Activated CD4-positive, alpha-beta T cell treated with anti-CD3 and anti-CD28 coated beads for 36 hours (primary cell): ENCODE measurements at regions of chr17 and their contacts with region 1.

Region 1: GRCh38 chr17:27892866-27893769 is at the start of gene LYRM9:
- DNase-seq: peak; percentile 96
- ATAC-seq: peak; percentile 96
- H3K4me3 Mint-ChIP-seq: peak within 1 kb of the TSS; percentile 76
- H3K27ac Mint-ChIP-seq: peak within 1 kb of the TSS; percentile 63
- H3K4me1 Mint-ChIP-seq: peaks cover 21% of the 10 kb centered on the region
- H3K27me3 Mint-ChIP-seq: peaks cover 17% of the 10 kb centered on the region
- total RNA-seq, gene LYRM9: 5.9 to 6.3 TPM

Region 2: DNA sequence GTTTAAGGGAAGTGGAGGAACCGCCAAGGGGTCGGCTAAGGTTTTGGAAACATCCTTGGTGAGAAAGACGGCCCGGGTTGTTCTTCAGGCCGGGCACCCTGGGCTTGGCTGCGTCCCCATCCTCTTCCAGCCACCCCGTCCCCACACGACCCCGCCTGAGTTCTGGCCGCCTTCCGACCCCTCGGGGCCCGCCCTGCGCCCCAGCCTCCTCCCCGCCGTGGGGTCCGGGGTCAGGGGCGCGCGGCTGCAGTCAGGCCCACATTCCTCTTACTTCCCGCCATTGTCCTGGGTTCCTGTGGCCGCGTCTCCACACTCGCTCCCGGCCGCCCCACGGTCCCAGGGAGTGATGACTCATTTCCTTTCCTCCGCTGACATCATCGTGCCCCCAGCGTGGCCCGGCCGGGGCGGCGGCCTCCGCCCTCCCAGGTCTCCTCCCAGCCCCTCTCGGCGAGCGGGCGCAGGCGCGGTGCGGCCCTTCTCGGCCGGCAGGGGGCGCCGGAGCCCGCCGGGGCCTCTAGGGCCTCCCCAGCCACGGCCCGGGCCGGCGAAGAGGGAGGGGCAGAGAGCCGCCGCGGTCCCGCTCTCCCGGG is 539.6 kb before region 1 on chr17:
- CTCF ChIA-PET with region 1: no interaction called
- POLR2A ChIA-PET with region 1: no interaction called
- intact Hi-C with region 1: loop called in 1 of 2 experiments (anchors 5 kb)
- DNase-seq: peak; percentile 94
- ATAC-seq: peak; percentile 90
- H3K4me3 Mint-ChIP-seq: peak overlapping the region; percentile 85
- H3K27ac Mint-ChIP-seq: peak overlapping the region; percentile 95
- H3K4me1 Mint-ChIP-seq: peaks cover 25% of the 10 kb centered on the region
- H3K27me3 Mint-ChIP-seq: no peaks in the 10 kb centered on the region

Region 3: GRCh38 chr17:27879987-27880608 is 13.0 kb before region 1 on chr17:
- CTCF ChIA-PET with region 1: interaction called, 31 read pairs
- POLR2A ChIA-PET with region 1: no interaction called
- intact Hi-C with region 1: no loop called
- DNase-seq: peak; percentile 85
- ATAC-seq: peak; percentile 91
- H3K4me3 Mint-ChIP-seq: no peak overlapping the region
- H3K27ac Mint-ChIP-seq: no peak overlapping the region
- H3K4me1 Mint-ChIP-seq: peaks cover 17% of the 10 kb centered on the region
- H3K27me3 Mint-ChIP-seq: no peaks in the 10 kb centered on the region

Region 4: DNA sequence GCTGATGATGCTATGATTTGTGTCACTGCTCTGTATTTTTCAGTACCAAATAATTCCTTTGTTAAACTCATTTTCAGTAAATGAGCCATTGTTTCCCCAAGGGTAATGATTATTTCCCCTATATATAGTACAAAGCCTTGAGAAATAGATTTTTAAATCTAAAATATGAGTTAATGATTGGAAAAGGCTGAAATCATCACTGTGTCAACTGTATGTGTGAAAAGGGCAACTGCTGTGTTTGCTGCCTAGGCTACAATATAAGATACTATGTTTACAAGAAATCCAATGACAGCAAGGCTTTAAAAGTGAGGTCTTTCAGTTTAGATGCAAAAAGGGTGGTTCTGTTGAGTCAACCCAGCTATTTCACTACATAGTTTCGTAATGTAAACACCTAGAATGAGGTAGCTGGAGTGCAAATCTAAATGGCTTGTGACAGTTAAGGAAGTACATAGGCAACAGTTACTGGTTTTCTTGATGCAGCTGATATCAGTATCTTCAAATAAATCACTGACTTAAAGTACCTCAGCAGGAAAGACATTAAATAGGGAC is 164.7 kb after region 1 on chr17:
- CTCF ChIA-PET with region 1: no interaction called
- POLR2A ChIA-PET with region 1: no interaction called
- intact Hi-C with region 1: no loop called
- DNase-seq: no peak
- ATAC-seq: peak; percentile 92
- H3K4me3 Mint-ChIP-seq: no peak overlapping the region
- H3K27ac Mint-ChIP-seq: no peak overlapping the region
- H3K4me1 Mint-ChIP-seq: peaks cover 35% of the 10 kb centered on the region
- H3K27me3 Mint-ChIP-seq: no peaks in the 10 kb centered on the region

Region 5: DNA sequence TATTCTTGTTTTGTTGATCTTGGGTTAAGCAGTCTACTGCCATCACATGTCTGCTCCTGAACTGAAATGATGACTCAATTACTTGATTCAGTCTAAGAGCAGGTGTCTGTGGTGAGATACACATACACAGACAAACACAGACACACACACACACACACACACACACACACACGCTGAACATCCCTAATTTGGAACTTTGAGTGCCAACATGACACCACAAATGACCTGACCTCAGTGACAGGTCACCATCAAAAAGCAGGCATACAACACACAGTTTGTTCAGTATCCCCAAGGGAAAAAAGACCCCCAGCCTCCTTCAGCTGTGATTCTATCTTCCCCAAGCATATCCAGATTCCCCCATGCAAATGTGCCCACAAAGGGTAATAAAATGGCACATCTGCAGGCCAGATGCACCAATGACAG is 295.7 kb after region 1 on chr17:
- CTCF ChIA-PET with region 1: no interaction called
- POLR2A ChIA-PET with region 1: no interaction called
- intact Hi-C with region 1: no loop called
- DNase-seq: no peak
- ATAC-seq: no peak
- H3K4me3 Mint-ChIP-seq: no peak overlapping the region
- H3K27ac Mint-ChIP-seq: no peak overlapping the region
- H3K4me1 Mint-ChIP-seq: no peaks in the 10 kb centered on the region
- H3K27me3 Mint-ChIP-seq: no peaks in the 10 kb centered on the region

Region 6: DNA sequence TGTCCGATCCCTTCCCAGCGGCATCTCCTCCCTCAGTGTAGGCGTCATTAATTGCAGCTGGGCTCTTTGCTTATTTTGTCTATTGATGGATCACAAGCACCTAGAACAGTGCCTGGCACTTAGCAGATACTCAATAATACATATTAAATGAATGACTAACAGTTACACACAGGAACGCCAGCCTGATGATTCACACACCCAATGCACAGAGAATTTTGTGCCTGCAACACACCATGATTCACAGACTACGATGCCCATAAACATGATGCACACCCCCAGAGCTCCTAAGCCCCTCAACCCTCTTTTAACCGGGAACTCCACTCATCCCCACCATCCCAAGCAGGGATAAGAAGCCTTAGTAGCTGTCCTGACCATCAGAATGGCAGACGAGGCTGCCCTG is 359.3 kb after region 1 on chr17:
- CTCF ChIA-PET with region 1: interaction called, 13 read pairs
- POLR2A ChIA-PET with region 1: no interaction called
- intact Hi-C with region 1: loop called (anchors 1 kb)
- DNase-seq: no peak
- ATAC-seq: no peak
- H3K4me3 Mint-ChIP-seq: no peak overlapping the region
- H3K27ac Mint-ChIP-seq: no peak overlapping the region
- H3K4me1 Mint-ChIP-seq: peaks cover 5% of the 10 kb centered on the region
- H3K27me3 Mint-ChIP-seq: peaks cover 14% of the 10 kb centered on the region